Ovary (tissue), 10 donors: ENCODE measurements at regions of chr12 and their contacts with region 1.

Region 1: DNA sequence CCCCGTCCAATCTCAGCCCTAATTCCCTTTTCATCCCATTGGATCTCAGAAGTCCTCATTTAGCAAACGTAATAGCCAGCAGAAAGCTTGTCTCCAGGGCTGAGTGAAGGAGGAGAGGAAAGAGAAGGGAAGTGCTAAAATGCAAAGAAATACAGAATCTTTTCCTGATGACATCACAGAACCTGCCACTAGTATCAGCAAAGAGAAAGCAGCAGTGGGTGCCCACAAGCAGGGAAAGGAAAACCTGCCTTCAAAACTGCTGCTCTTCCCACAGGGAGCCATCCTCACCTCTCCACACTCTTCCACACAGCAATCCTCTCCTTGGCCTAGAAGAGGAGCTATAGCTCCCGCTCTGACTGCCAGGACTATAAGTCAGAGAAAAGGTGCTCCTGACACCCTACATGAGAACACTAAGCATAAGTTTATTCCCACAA is 11.3 kb downstream of the MED13L start:
- DNase-seq: no peak
- H3K4me3 ChIP-seq: no peak overlapping the region
- H3K27ac ChIP-seq: no peak overlapping the region
- H3K4me1 ChIP-seq: peaks cover 15% of the 10 kb centered on the region
- H3K27me3 ChIP-seq: no peaks in the 10 kb centered on the region
- CTCF ChIP-seq: no peak
- EP300 ChIP-seq: no peak
- POLR2A ChIP-seq: no peak

Region 2: GRCh38 chr12:115823635-115824034 is 442.6 kb before region 1 on chr12:
- intact Hi-C with region 1: loop called in 1 of 4 experiments (anchors 10 kb)
- DNase-seq: no peak
- H3K4me3 ChIP-seq: no peak overlapping the region
- H3K27ac ChIP-seq: no peak overlapping the region
- H3K4me1 ChIP-seq: no peaks in the 10 kb centered on the region
- H3K27me3 ChIP-seq: no peaks in the 10 kb centered on the region
- CTCF ChIP-seq: no peak
- EP300 ChIP-seq: no peak
- POLR2A ChIP-seq: no peak

Region 3: DNA sequence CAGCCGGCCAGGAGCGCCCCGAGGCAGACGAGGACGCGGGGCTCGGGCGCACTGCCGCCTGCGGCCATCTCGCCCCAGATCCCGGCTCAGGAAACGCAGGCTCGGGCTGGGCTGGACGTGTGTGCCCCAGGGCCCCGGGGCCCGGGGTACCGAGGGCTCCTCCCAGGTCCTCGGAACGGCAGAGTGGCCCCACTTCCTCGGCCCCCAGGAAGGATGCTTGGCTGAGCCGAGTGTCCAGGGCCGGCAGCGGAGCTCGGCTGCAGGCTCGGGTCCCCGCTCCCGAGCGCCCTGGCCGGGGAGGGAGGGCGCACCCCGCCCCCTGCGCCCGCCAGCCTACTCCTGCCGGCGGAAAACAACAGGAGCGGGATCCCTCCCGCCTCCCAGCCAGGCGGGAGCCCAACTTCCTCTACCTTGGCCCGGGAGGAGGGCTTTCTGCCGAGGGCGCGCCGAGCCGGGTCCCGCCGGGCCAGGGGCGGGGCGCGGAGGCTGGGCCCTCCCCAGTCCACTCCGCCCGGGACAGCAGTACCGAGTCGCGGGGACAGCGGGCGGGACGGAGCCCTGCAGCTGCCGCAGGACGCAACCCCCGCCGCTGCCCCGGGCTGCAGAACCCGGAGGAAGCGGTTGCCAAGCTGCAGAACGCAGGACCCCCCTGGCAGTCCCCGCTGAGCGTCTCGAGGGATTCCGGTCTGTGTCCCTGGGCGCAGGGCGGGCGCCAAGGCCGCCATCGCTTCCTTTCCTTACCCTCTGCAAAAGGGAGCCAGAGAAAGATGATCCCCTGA is 1837.6 kb after region 1 on chr12 and contains the start of gene VSIG10:
- intact Hi-C with region 1: no loop called
- DNase-seq: peak; percentile 64 to 80 (median 68)
- H3K4me3 ChIP-seq: peak within 1 kb of the TSS; percentile 94
- H3K27ac ChIP-seq: peak within 1 kb of the TSS; percentile 78 to 82
- H3K4me1 ChIP-seq: peaks cover 2% of the 10 kb centered on the region
- H3K27me3 ChIP-seq: no peaks in the 10 kb centered on the region
- CTCF ChIP-seq: no peak
- EP300 ChIP-seq: no peak
- POLR2A ChIP-seq: peak; percentile 8
- total RNA-seq, gene VSIG10: 24.7 to 33.6 (median 27.8) TPM